Right ventricle myocardium inferior (tissue), 1 donor: ENCODE measurements at regions of chr6 and their contacts with region 1.

Region 1: DNA sequence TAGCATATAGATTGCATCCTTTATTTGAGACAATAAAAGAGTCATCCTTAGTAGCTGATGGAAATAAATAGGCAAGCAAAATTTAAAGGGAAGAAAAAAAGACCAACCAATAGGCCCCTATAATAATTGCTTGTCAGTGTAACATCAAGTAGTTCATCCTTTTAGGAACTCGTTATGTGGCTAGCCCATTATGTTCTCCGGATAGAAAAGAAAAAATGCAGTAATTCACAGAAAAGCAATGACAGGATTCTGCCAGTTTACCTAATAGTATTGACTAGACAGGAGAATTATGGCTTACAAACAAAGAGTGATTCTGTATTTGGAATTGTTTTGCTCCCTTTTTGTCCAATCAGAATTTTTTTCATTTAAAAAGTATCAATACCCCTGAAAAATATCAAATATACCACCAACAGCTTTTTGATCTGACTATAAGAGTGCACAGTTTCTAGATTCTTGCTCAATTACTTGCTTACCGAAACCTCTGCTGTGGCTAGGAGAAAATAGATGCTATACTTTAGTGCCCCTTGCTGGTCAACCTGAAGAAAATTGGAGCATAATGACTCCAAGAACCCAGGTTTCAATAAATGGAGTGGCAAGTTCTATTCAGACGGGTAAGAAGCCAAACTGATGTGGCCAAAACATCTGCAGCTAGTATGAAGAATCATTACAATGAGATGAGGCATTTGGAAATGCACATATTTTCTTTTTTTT is 91.5 kb upstream of the SASH1 start:
- DNase-seq: no peak
- ATAC-seq: peak; percentile 72

Region 2: DNA sequence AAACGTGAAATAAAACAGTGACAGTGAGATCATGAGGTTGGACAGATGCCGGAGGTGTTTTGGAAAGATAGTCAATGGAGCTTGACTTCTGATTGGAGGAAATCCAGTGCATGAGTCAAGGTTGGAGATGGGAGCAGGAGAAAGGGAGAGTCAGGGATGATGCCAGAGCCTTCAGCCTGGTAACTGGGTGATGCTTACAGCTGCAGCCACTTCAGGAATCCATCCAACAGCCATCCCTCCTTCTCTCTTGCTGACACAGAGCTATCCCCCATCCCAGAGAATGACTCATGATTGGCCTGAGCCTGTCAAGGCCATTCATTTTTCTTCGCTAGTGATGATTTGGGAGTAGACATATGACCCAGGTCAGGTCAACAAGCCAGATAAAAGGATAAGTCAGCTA is 629.9 kb before region 1 on chr6:
- intact Hi-C with region 1: no loop called
- DNase-seq: no peak
- ATAC-seq: peak; percentile 16

Region 3: GRCh38 chr6:148177589-148178233 is 73.4 kb before region 1 on chr6:
- intact Hi-C with region 1: loop called (anchors 1 kb)
- DNase-seq: peak; percentile 78
- ATAC-seq: peak; percentile 44